ENCODE measurements at regions of chr19 and their contacts with region 1.

Region 1: DNA sequence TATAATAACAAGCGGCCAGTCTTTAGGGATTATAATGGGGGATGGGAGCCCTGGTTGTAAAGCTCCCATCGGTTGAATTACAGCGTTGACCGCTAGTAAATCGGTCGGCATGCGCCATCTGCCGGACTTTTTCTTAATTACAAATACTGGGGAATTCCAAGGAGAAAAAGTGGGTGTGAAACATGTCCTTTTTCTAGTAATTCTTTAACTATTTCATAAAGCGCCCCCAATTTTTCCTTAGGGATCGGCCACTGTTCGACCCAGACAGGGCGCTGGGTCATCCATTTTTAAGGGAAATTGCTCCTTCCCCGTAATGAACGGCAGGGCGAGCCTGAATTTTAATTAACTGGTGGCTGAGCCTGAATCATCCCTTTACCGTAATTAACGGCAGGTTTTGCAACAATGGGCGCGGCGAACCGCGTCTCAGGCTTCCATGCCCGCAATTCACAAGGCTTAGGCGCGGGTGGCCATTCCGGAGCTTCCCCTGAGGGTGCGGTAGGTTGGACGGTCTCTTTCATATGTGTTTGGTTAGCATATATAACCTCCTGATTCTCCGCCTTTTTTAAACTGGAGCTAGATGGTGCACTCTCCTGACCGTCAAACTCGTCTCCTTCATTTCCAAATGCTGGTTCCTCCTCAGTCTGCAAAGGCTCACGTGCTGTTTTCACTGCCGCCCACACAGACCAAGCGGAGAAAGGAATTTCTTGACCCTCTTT is 30.2 kb upstream of the EVI5L start:
- DNase-seq: peak; percentile 84

Region 2: GRCh38 chr19:7104747-7105447 is 694.9 kb before region 1 on chr19:
- intact Hi-C with region 1: loop called (anchors 10 kb)
- DNase-seq: no peak

Region 3: DNA sequence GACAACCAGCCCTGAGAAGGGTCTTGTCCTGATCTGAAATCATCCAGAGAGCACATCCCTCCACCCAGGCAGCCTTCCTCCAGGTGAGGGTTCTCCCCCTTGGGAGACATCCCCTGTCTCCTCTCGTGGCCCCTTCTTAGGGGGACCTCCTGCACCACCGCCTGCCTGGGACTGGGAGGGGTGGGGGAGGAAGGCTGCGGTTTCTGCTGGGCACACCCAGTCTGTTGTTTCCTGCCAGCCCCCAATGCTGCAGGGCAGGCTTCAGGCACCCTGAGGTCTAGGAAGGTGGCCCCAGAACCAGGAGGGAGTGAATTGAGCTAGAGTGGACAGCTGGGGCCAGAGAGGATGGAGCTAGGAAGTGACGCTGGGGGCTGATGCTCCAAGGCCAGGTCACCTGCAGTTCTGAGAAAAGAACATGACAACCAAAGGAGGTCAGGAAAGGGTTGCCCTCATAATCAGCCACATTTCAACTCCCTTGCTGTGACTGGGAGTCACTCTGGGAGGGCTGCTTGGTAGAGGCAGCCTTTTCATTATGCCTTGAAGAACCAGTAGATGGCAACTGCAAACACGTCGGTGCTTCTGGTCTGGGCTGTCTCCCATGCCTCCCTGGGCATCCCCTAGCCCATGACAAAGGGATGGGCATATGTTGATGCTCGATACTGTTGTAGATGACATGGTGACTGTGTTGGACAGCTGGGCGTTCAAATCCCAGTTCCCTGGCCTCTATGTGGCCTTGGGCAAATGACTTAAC is 449.7 kb before region 1 on chr19:
- intact Hi-C with region 1: loop called (anchors 10 kb)
- DNase-seq: no peak

Region 4: DNA sequence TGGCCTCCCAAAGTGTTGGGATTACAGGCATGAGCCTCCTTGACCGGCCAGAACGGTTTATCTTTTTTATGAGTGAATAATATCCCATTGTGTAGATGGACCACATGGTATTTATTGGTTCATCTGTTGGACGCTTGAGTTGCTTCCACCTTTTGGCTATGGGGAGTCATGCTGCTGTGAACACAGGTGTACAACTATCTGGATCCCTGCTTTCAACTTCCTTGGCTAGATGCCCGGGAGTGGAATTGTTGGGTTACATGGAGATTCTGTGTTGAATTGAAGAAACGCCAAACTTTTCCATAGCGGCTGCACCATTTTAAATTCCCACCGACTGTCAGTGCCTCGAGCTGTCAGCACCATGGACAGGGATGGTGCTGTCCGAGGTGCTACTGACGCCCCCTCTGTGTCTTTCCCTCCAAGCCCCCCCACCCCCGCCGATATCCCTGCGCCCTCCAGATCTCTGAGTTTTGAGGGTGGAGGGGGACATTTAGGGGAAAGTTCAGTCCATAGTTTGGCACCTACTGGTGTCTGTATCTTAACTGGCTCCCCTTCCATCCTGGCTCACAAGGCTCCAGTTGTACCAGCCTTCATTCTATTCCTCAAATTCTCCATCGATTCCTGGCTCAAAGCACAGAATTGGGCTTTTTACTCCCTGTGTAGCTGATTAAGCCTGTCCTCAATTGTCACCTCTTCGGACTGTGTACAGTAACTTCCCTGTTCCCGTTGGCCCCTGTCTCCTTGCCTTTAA is 237.0 kb before region 1 on chr19:
- intact Hi-C with region 1: loop called (anchors 1 kb)
- DNase-seq: no peak

Region 5: GRCh38 chr19:7652061-7652641 is 147.6 kb before region 1 on chr19:
- intact Hi-C with region 1: loop called (anchors 5 kb)
- DNase-seq: peak; percentile 95

Region 6: DNA sequence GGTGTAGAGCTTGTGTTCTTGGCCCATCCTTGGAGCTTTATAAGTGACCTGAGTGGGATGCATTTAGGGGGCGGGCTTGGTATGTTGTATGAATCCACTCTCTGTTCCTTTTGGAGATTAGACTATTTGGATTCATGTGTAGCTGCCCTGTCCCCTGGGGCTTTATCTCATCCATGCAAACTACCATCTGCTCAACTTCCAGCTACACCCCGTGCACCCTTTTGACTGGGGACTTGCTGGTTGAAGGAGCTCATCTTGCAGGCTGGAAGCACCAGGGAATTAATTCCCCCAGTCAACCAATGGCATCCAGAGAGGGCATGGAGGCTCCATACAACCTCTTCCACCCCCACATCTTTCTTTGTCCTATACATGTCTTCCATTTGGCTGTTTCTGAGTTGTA is 30.6 kb before region 1 on chr19:
- intact Hi-C with region 1: no loop called
- DNase-seq: no peak

Region 7: DNA sequence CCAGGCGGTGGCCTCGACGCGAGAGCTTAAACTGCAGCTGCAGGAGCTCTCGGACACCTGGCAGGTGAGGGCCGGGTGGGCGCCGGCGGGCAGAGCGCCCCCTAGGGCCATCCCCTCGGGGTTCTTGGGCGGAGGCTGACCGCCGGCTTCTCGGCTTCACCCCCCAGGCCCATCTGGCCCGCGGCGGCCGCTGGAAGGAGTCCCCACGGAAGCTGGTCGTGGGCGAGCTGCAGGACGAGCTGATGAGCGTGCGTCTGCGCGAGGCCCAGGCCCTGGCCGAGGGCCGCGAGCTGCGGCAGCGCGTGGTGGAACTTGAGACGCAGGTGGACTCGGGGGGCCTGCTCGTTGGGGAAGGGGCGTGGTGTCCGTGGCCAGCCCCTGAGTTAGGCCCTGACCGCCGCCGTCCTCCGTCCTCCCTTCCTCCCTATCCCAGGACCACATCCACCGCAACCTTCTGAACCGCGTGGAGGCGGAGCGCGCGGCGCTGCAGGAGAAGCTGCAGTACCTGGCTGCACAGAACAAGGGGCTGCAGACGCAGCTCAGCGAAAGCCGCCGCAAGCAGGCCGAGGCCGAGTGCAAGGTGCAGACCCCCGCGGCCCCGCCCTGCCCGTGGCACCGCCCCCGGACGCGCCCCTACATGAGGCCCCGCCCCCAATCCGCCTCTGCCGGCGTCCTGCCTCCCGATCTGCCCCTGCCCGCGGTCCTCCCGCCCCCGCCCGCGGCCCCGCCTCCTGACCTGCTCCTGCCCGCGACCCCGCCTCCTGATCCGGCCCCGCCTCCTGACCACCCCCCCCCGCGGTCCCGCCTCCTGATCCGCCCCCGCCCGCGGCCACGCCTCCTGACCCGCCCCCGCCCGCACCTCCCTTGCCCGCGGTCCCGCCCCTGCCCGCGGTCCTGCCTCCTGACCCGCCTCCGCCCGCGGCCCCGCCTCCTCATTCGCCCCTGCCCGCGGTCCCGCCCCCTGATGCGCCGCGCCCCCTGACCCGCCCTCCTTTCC is 62.5 kb after region 1 on chr19:
- intact Hi-C with region 1: no loop called
- DNase-seq: no peak